Endothelial cell of umbilical vein (primary cell): ENCODE measurements at regions of chr18 and their contacts with region 1.

Region 1: DNA sequence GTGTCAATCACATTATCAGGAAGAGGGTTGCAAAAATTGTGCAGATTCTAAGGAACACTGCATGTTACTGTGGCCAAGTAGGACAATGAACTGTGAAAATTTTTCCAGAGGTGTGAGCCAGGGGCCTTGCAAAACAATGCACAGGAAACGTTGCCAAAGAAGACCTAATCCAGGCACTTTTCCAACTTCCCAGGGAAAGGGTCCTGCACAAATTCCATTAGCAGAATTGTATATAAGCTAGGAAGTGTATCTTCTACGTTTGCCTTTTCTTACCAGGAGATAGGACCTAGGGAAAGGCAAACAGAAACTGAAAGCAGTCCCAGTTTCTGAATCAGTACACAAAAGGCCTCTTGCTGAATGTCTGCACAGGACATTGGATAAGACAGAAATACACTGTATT is 1888.3 kb upstream of the CELF4 start:
- DNase-seq: peak; percentile 99
- H3K4me3 ChIP-seq: peak overlapping the region in 1 of 3 experiments; percentile 55
- H3K27ac ChIP-seq: peak overlapping the region; percentile 89
- H3K4me1 ChIP-seq: peaks cover 46% of the 10 kb centered on the region
- H3K27me3 ChIP-seq: no peaks in the 10 kb centered on the region
- CTCF ChIP-seq: no peak
- POLR2A ChIP-seq: no peak

Region 2: GRCh38 chr18:39414009-39414700 is 39.7 kb before region 1 on chr18:
- CTCF ChIA-PET with region 1: no interaction called
- POLR2A ChIA-PET with region 1: no interaction called
- dilution Hi-C with region 1: no loop called
- intact Hi-C with region 1: loop called (anchors 5 kb)
- DNase-seq: peak; percentile 86
- H3K4me3 ChIP-seq: no peak overlapping the region
- H3K27ac ChIP-seq: no peak overlapping the region
- H3K4me1 ChIP-seq: peaks cover 12% of the 10 kb centered on the region
- H3K27me3 ChIP-seq: no peaks in the 10 kb centered on the region
- CTCF ChIP-seq: no peak
- POLR2A ChIP-seq: no peak